ENCODE measurements at regions of chr6 and their contacts with region 1.

Region 1: GRCh38 chr6:52284460-52285176 is at the start of gene MCM3:
- DNase-seq: peak; percentile 98
- H3K4me3 Mint-ChIP-seq: no peak within 1 kb of the TSS
- H3K27ac Mint-ChIP-seq: peak within 1 kb of the TSS; percentile 81
- H3K4me1 Mint-ChIP-seq: peaks cover 61% of the 10 kb centered on the region
- H3K27me3 Mint-ChIP-seq: no peaks in the 10 kb centered on the region

Region 2: GRCh38 chr6:52263709-52264540 is 20.7 kb before region 1 on chr6:
- CTCF ChIA-PET with region 1: interaction called, 14 read pairs
- DNase-seq: peak; percentile 78
- H3K4me3 Mint-ChIP-seq: no peak overlapping the region
- H3K27ac Mint-ChIP-seq: peak overlapping the region; percentile 29
- H3K4me1 Mint-ChIP-seq: peaks cover 13% of the 10 kb centered on the region
- H3K27me3 Mint-ChIP-seq: no peaks in the 10 kb centered on the region

Region 3: DNA sequence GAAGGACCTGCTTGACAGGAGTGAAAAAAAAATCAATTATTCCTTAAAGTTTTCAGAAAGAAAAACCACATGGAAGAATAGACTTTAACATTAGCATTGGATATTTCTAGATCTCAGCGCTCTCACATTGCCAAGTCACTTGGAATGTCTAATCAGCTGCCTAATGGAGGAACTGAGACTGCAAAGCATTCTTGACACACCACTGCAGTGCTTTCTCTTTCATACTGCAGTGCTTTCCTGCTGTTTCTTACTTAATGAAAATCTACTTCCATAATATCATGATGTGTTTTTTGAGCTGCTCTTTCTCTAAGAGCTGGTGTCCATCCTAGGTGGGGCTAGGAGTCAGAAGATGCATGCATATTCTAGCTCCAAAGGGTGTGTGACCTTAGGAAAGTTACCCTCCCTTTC is 20.4 kb after region 1 on chr6:
- CTCF ChIA-PET with region 1: interaction called, 32 read pairs
- DNase-seq: no peak
- H3K4me3 Mint-ChIP-seq: peak overlapping the region; percentile 19
- H3K27ac Mint-ChIP-seq: peak overlapping the region; percentile 81
- H3K4me1 Mint-ChIP-seq: peaks cover 65% of the 10 kb centered on the region
- H3K27me3 Mint-ChIP-seq: no peaks in the 10 kb centered on the region

Region 4: DNA sequence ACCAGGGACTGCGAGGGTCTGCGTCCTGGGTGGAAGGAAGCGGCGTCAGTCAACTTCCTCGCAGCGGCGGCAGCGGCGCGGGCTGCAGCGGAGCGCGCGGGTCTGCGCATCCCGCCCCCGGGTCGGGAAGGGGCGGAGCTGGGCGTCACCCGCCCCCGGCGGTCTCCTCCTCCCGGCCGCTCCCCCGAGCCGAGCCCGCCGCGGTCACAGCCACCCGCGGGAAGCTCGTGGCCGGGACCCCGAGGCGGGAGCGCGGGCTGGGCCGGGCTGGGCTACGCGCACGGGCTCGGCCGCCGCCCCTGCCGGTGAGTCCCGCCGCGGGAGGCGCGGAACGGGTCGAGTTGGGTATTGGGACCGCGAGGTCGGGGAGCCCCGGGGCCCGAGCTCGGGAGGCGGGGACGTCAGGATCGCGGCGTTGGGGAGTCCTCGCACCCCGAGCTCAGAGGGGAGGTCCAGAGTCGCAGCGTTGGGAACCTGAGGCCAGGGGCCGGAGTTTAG is 77.4 kb after region 1 on chr6 and contains the start of gene PAQR8:
- CTCF ChIA-PET with region 1: interaction called, 37 read pairs
- DNase-seq: peak; percentile 84
- H3K4me3 Mint-ChIP-seq: peak within 1 kb of the TSS; percentile 88
- H3K27ac Mint-ChIP-seq: peak within 1 kb of the TSS; percentile 86
- H3K4me1 Mint-ChIP-seq: peaks cover 42% of the 10 kb centered on the region
- H3K27me3 Mint-ChIP-seq: peaks cover 7% of the 10 kb centered on the region

Region 5: GRCh38 chr6:52399511-52400312 is 115.1 kb after region 1 on chr6:
- CTCF ChIA-PET with region 1: interaction called, 159 read pairs
- DNase-seq: peak; percentile 60
- H3K4me3 Mint-ChIP-seq: no peak overlapping the region
- H3K27ac Mint-ChIP-seq: peak overlapping the region; percentile 97
- H3K4me1 Mint-ChIP-seq: peaks cover 68% of the 10 kb centered on the region
- H3K27me3 Mint-ChIP-seq: no peaks in the 10 kb centered on the region